Prostate gland (tissue), 2 donors: ENCODE measurements at regions of chr7 and their contacts with region 1.

Region 1: GRCh38 chr7:140696680-140697446 is at the start of gene NDUFB2:
- DNase-seq: peak; percentile 75
- H3K4me3 ChIP-seq: peak within 1 kb of the TSS; percentile 69 to 79
- H3K27ac ChIP-seq: peak within 1 kb of the TSS; percentile 93 to 94
- H3K4me1 ChIP-seq: peaks cover 5% of the 10 kb centered on the region
- H3K27me3 ChIP-seq: no peaks in the 10 kb centered on the region
- CTCF ChIP-seq: peak in 2 of 4 experiments; percentile 4 to 15
- POLR2A ChIP-seq: peak; percentile 83
- total RNA-seq, gene NDUFB2: 151 to 333 TPM

Region 2: GRCh38 chr7:140562926-140563481 is 133.9 kb before region 1 on chr7:
- intact Hi-C with region 1: no loop called
- DNase-seq: no peak
- H3K4me3 ChIP-seq: no peak overlapping the region
- H3K27ac ChIP-seq: no peak overlapping the region
- H3K4me1 ChIP-seq: no peaks in the 10 kb centered on the region
- H3K27me3 ChIP-seq: no peaks in the 10 kb centered on the region
- CTCF ChIP-seq: no peak
- POLR2A ChIP-seq: no peak

Region 3: GRCh38 chr7:140924019-140924820 is 227.4 kb after region 1 on chr7:
- intact Hi-C with region 1: loop called (anchors 10 kb)
- DNase-seq: peak; percentile 62
- H3K4me3 ChIP-seq: peak overlapping the region; percentile 80 to 99
- H3K27ac ChIP-seq: peak overlapping the region; percentile 97 to 99
- H3K4me1 ChIP-seq: no peaks in the 10 kb centered on the region
- H3K27me3 ChIP-seq: no peaks in the 10 kb centered on the region
- CTCF ChIP-seq: peak in 2 of 4 experiments; percentile 46 to 58
- POLR2A ChIP-seq: peak; percentile 25